ENCODE measurements at regions of chrX and their contacts with region 1.

Region 1: DNA sequence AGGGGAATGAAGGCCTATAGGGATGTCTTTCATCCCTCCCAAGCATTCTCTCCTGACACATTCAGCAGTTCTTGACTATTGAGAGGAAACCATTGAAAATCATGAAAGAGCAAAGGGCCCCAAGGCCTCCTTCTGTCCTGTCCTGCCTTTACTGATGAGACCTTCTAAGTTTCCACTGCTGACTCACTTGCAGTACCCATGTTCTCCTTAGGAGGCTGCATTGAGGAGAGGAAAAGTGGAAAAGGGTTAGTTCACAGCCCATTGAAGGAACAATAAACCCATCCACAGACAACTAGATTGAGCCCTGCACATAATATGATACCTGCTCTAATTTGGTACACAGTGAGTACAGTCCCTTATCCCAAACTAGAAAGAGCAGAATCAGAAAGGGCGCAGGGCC is 115.1 kb upstream of the PNPLA4 start:
- DNase-seq: no peak

Region 2: GRCh38 chrX:6095469-6095868 is 1946.8 kb before region 1 on chrX:
- intact Hi-C with region 1: loop called in 1 of 2 experiments (anchors 10 kb)
- DNase-seq: no peak

Region 3: GRCh38 chrX:8067754-8068462 is 25.6 kb after region 1 on chrX:
- intact Hi-C with region 1: no loop called
- DNase-seq: no peak

Region 4: DNA sequence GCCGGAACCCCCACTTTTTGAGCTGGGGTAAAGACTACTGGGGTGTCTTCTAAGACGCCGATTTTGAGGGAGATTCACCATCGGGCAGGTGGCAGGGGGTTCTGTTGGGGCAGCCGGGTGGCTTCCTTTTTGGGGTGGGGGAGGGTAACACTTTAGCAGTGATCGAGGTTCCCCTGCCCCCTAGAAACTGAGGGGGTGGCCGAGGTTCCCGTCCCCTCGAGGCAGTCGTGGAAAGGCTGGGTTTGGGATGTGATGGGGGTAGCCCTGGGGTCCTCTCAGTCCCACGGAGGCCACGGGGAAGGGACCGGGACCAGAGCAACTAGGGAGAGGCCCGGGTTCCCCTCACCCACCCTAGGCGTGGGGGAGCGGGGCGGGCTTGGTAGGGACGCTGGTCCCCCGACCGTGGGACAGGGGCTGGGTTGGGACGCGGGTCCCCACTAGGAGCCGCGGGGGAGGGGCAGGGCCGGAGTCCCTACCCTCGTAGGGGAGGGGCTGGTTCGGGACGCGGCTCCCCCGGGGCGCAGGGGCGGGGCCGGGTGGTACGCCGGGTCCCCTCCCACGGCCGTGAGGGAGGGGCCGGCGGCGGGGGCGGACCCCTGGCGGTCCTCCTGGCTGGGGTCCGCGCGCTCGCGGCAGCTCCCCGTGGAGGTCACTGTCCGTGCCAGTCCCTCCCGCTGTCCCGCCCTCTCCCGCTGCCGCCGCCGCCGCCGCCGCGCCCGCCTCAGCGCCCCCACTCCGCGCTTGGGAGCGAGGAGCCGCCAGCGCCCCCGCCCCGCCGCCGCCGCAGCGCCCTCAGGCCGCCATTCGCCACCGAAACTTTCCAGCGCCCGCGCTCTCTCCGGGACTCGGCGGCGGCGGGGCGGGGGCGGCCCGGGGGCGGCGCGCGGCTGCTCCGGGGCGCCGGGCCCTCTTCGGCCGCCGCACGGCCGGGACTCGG is 1422.4 kb after region 1 on chrX and contains the start of gene TBL1X:
- intact Hi-C with region 1: no loop called
- DNase-seq: peak; percentile 83
- total RNA-seq, gene TBL1X: 25.5 to 49.3 TPM